Natural killer cell (primary cell): ENCODE measurements at regions of chr1 and their contacts with region 1.

Region 1: DNA sequence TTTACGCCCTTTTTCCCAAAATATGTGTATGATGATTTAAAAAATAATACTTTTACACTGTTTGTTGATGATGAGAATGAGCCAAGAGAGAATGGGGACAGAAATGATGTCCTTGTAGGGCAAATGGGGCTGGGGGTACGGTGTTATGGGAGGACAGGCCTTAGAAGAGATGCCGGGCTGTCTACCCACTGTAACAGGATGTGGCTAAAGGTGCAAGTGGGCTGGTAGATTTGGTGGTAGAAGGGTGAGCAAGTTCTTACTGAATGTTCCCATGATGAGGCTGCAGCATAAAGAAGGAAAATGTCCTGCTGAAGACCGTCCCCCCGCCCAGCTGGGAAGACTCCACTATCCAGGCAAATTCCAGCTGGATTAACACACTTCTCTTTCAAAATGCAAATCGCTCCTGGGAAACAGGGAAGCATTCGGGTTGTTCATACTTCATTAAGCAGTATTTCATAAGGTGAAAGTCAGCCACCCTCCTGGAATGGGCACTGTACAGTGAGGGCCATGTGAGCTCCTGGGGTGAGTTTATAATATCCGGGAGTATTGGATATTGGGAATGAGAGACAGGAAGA is 14.0 kb downstream of the GPA33 start:
- DNase-seq: peak in 1 of 2 donors; percentile 32
- ATAC-seq: peak; percentile 61 to 96 (median 79)
- H3K4me3 ChIP-seq: no peak overlapping the region
- H3K4me3 Mint-ChIP-seq: peak overlapping the region; percentile 80
- H3K27ac ChIP-seq: peak overlapping the region; percentile 15
- H3K27ac Mint-ChIP-seq: peak overlapping the region; percentile 68 to 73
- H3K4me1 ChIP-seq: peaks cover 38% of the 10 kb centered on the region
- H3K4me1 Mint-ChIP-seq: peaks cover 55 to 56% of the 10 kb centered on the region in 2 donors
- H3K27me3 ChIP-seq: no peaks in the 10 kb centered on the region
- H3K27me3 Mint-ChIP-seq: peaks cover 0 to 8% of the 10 kb centered on the region in 2 donors
- CTCF ChIP-seq: no peak

Region 2: DNA sequence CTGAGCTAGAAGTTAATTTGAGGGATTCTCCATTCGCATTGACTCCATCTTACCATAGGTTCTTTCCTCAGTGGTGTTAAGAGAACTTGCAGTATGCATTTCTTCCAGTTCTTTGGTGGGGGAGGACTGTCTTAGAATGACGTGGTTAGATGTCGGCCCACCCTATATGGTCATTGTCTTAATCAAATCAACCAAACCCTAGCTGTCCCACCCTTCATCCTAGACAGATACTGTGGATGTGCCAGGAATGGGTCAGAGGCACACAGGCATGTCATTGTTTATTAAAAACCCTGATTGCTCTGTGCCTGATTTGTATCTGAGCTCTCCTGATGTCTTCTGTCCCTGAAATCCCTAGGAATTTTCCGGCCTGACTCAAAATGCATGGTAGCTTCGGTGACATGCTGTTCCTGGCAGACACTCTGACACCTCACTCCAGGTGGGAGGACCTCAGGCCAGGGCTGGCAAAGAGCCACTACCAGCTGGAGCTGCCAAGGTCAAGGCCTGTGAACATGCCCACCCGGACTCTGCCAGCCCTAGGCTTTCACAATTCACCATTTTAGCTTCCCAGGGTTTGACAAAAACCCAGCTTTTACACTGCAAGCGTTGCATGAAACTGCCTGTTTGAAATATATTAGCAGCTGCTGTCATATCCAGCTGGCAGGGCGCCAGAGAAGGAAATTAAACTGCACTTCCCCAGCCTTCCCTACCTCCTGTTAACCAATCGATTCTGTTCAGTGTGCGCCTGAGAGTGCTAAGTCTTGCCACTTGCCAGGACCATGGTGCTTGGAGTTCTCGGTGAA is 1043.5 kb before region 1 on chr1:
- intact Hi-C with region 1: no loop called
- DNase-seq: no peak
- ATAC-seq: no peak
- H3K4me3 ChIP-seq: no peak overlapping the region
- H3K4me3 Mint-ChIP-seq: no peak overlapping the region
- H3K27ac ChIP-seq: no peak overlapping the region
- H3K27ac Mint-ChIP-seq: no peak overlapping the region
- H3K4me1 ChIP-seq: no peaks in the 10 kb centered on the region
- H3K4me1 Mint-ChIP-seq: no peaks in the 10 kb centered on the region
- H3K27me3 ChIP-seq: peaks cover 3% of the 10 kb centered on the region
- H3K27me3 Mint-ChIP-seq: peaks cover 8 to 14% of the 10 kb centered on the region in 2 donors
- CTCF ChIP-seq: no peak

Region 3: GRCh38 chr1:167090314-167090942 is 14.2 kb after region 1 on chr1 and contains the start of gene GPA33:
- intact Hi-C with region 1: loop called (anchors 2 kb)
- DNase-seq: peak in 1 of 2 donors; percentile 75
- ATAC-seq: peak; percentile 91 to 93 (median 91)
- H3K4me3 ChIP-seq: no peak within 1 kb of the TSS
- H3K4me3 Mint-ChIP-seq: peak within 1 kb of the TSS; percentile 80
- H3K27ac ChIP-seq: peak within 1 kb of the TSS; percentile 86
- H3K27ac Mint-ChIP-seq: peak within 1 kb of the TSS; percentile 98
- H3K4me1 ChIP-seq: peaks cover 21% of the 10 kb centered on the region
- H3K4me1 Mint-ChIP-seq: peaks cover 32 to 35% of the 10 kb centered on the region in 2 donors
- H3K27me3 ChIP-seq: no peaks in the 10 kb centered on the region
- H3K27me3 Mint-ChIP-seq: no peaks in the 10 kb centered on the region
- CTCF ChIP-seq: no peak
- total RNA-seq, gene GPA33: 2.9 to 4.6 (median 4.5) TPM